Caco-2 (cell line): ENCODE measurements at regions of chr15 and their contacts with region 1.

Region 1: GRCh38 chr15:68672781-68673205 is 94.0 kb downstream of the CORO2B start:
- DNase-seq: peak in 1 of 2 experiments; percentile 16
- H3K4me3 ChIP-seq: no peak overlapping the region
- H3K4me3 Mint-ChIP-seq: no peak overlapping the region
- H3K27ac Mint-ChIP-seq: no peak overlapping the region
- H3K4me1 ChIP-seq: no peaks in the 10 kb centered on the region
- H3K4me1 Mint-ChIP-seq: no peaks in the 10 kb centered on the region
- H3K27me3 ChIP-seq: no peaks in the 10 kb centered on the region; the same call in 1 of the 2 replicates
- H3K27me3 Mint-ChIP-seq: peaks cover 3% of the 10 kb centered on the region
- CTCF ChIP-seq: peak in 1 of 2 experiments; percentile 43

Region 2: DNA sequence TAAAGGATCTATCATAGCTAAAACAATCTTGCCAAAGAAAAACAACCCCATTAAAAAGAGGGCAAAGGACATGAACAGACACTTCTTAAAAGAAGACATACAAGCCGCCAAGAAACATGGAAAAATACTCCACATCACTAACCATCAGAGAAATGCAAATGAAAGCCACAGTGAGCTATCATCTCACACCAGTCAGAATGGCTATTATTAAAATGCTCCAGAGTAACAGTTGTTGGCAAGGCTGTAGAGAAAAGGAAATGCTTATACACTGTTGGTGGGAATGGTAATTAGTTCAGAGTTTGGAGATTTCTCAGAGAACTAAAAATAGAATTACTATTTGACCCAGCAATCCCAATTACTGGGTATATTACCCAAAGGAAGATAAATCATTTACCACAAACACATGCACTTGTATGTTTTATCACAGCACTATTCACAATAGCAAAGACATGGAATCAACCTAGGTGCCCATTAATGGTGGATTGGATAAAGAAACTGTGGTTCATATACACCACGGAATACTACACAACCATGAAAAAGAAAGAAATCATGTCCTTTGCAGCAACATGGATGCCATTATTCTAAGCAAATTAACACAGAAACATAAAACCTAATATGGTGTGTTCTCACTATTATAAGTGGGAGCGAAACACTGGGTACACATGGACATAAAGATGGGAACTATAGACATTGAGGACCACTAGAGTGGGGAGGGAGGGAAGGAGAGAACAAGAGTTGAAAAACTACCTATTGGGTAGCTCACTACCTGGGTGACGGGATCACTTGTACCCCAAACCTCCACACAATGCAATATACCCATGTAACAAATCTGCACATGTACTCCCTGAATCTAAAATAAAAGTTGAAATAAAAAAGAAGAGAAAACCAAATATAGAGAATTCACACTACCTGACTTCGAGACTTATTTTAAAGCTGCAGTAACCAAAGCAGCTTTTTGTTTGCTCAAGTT is 273.4 kb before region 1 on chr15:
- CTCF ChIA-PET with region 1: no interaction called
- POLR2A ChIA-PET with region 1: no interaction called
- intact Hi-C with region 1: no loop called
- DNase-seq: no peak
- H3K4me3 ChIP-seq: no peak overlapping the region
- H3K4me3 Mint-ChIP-seq: no peak overlapping the region
- H3K27ac Mint-ChIP-seq: no peak overlapping the region
- H3K4me1 ChIP-seq: peaks cover 4% of the 10 kb centered on the region
- H3K4me1 Mint-ChIP-seq: peaks cover 9% of the 10 kb centered on the region
- H3K27me3 ChIP-seq: no peaks in the 10 kb centered on the region
- H3K27me3 Mint-ChIP-seq: no peaks in the 10 kb centered on the region
- CTCF ChIP-seq: no peak

Region 3: DNA sequence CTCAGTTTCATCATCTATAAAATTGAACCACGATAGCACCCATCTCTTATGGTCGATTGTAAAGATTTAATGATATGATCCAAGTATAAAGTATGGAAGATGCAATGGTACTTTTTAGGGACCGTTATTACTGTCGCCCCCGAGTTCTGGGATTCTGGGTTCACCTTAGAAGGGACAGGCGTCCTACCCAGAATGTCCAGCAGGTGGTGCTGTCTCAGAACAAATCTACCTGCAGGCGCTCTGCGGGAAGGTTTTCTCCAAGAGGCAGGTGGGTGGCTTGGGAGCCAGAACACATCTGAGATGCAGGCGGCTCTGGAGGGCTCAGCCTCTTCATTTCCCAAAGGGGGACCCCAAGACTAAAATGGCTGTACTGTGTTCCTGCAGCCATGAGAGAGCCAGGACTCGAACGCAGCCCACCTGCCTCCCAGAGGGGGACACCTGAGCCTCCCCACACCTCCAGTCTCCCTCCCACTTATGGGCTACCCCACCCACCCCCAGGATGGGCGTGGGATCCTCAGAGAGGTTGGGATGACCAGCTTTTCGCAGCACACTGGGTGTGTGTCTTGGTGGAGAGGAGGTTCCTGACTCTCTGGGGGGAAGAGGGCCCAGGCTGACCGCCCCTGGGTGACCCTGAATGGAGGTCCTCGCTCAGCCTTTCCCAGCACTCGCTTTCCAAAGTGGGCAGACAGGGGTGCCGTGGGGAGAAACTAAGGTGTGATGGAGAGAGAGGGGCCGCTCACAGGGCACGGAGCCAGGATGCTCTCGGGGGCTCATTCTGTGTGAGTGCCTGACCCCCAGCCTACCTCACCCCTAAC is 122.1 kb before region 1 on chr15:
- CTCF ChIA-PET with region 1: interaction called, 34 read pairs
- POLR2A ChIA-PET with region 1: no interaction called
- intact Hi-C with region 1: loop called (anchors 1 kb)
- DNase-seq: peak; percentile 70 to 80
- H3K4me3 ChIP-seq: no peak overlapping the region
- H3K4me3 Mint-ChIP-seq: no peak overlapping the region
- H3K27ac Mint-ChIP-seq: no peak overlapping the region
- H3K4me1 ChIP-seq: no peaks in the 10 kb centered on the region
- H3K4me1 Mint-ChIP-seq: no peaks in the 10 kb centered on the region
- H3K27me3 ChIP-seq: no peaks in the 10 kb centered on the region
- H3K27me3 Mint-ChIP-seq: peaks cover 19% of the 10 kb centered on the region
- CTCF ChIP-seq: peak; percentile 84 to 89

Region 4: GRCh38 chr15:68559345-68560310 is 113.2 kb before region 1 on chr15:
- CTCF ChIA-PET with region 1: interaction called, 72 read pairs
- POLR2A ChIA-PET with region 1: no interaction called
- intact Hi-C with region 1: loop called (anchors 1 kb)
- DNase-seq: peak; percentile 66 to 84
- H3K4me3 ChIP-seq: no peak overlapping the region
- H3K4me3 Mint-ChIP-seq: peak overlapping the region; percentile 61
- H3K27ac Mint-ChIP-seq: no peak overlapping the region
- H3K4me1 ChIP-seq: no peaks in the 10 kb centered on the region
- H3K4me1 Mint-ChIP-seq: no peaks in the 10 kb centered on the region
- H3K27me3 ChIP-seq: no peaks in the 10 kb centered on the region
- H3K27me3 Mint-ChIP-seq: peaks cover 13% of the 10 kb centered on the region
- CTCF ChIP-seq: peak; percentile 88 to 90

Region 5: GRCh38 chr15:68608206-68608843 is 64.5 kb before region 1 on chr15:
- CTCF ChIA-PET with region 1: no interaction called
- POLR2A ChIA-PET with region 1: no interaction called
- intact Hi-C with region 1: no loop called
- DNase-seq: no peak
- H3K4me3 ChIP-seq: no peak overlapping the region
- H3K4me3 Mint-ChIP-seq: no peak overlapping the region
- H3K27ac Mint-ChIP-seq: peak overlapping the region; percentile 8
- H3K4me1 ChIP-seq: no peaks in the 10 kb centered on the region
- H3K4me1 Mint-ChIP-seq: no peaks in the 10 kb centered on the region
- H3K27me3 ChIP-seq: no peaks in the 10 kb centered on the region
- H3K27me3 Mint-ChIP-seq: peaks cover 3% of the 10 kb centered on the region
- CTCF ChIP-seq: no peak

Region 6: DNA sequence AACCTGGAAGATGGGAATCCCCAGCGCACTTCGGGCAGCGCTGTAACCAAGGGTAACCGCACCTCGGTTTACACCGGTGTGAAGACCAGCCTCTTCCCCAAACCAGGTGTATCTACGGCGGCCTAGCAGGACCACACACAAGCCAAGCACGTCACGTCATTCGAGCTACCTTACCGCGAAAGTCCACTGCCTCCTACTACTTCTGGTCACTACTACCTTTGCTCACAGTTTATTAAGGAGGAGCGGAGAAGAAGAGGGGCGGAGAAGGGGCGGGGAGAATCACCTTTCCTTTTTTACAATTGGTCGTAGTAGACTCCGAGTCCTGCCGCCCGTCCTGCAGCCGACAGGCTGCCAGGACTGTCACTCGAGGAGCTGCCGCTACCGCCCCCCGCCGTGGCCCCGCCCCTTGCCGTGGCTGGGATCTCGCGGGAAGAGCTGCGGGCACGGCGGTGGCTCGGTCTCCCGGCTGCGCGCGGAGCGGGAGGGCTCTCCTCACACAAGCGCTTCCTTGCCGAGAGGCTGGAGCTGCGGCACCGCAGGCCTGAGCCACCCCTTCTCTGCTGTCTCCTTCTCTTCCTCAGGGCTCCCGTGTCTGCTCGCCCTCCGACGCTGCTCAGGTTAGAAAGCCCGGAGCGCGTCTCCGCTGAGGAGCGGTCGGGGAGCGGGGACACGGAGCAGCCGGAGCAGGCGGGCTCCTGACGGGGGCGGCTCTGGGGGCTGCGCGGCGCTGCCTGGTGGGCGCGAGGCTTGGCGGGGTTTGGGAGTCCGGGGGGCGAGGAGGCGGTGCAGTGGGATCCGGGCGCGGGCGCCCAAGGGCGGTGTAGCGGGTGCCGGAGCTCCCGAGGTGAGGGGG is 487.6 kb after region 1 on chr15 and contains the start of gene GLCE:
- CTCF ChIA-PET with region 1: no interaction called
- POLR2A ChIA-PET with region 1: no interaction called
- intact Hi-C with region 1: no loop called
- DNase-seq: peak; percentile 95 to 98
- H3K4me3 ChIP-seq: peak within 1 kb of the TSS; percentile 98
- H3K4me3 Mint-ChIP-seq: peak within 1 kb of the TSS; percentile 82
- H3K27ac Mint-ChIP-seq: peak within 1 kb of the TSS; percentile 77
- H3K4me1 ChIP-seq: no peaks in the 10 kb centered on the region
- H3K4me1 Mint-ChIP-seq: peaks cover 18% of the 10 kb centered on the region
- H3K27me3 ChIP-seq: no peaks in the 10 kb centered on the region
- H3K27me3 Mint-ChIP-seq: no peaks in the 10 kb centered on the region
- CTCF ChIP-seq: no peak
- total RNA-seq, gene GLCE: 9.1 and 10.2 TPM in 2 replicates